ENCODE measurements at regions of chr2 and their contacts with region 1.

Region 1: GRCh38 chr2:144237830-144238627 is 281.9 kb downstream of the ZEB2 start:
- DNase-seq: no peak
- H3K4me3 Mint-ChIP-seq: no peak overlapping the region
- H3K27ac Mint-ChIP-seq: no peak overlapping the region
- H3K4me1 Mint-ChIP-seq: peaks cover 53% of the 10 kb centered on the region
- H3K27me3 Mint-ChIP-seq: no peaks in the 10 kb centered on the region

Region 2: GRCh38 chr2:143901185-143901842 is 336.7 kb before region 1 on chr2:
- CTCF ChIA-PET with region 1: no interaction called
- POLR2A ChIA-PET with region 1: no interaction called
- intact Hi-C with region 1: no loop called
- DNase-seq: no peak
- H3K4me3 Mint-ChIP-seq: no peak overlapping the region
- H3K27ac Mint-ChIP-seq: no peak overlapping the region
- H3K4me1 Mint-ChIP-seq: peaks cover 14% of the 10 kb centered on the region
- H3K27me3 Mint-ChIP-seq: peaks cover 3% of the 10 kb centered on the region

Region 3: GRCh38 chr2:144132357-144132756 is 105.7 kb before region 1 on chr2:
- CTCF ChIA-PET with region 1: no interaction called
- POLR2A ChIA-PET with region 1: no interaction called
- intact Hi-C with region 1: no loop called
- DNase-seq: no peak
- H3K4me3 Mint-ChIP-seq: no peak overlapping the region
- H3K27ac Mint-ChIP-seq: no peak overlapping the region
- H3K4me1 Mint-ChIP-seq: peaks cover 23% of the 10 kb centered on the region
- H3K27me3 Mint-ChIP-seq: no peaks in the 10 kb centered on the region

Region 4: DNA sequence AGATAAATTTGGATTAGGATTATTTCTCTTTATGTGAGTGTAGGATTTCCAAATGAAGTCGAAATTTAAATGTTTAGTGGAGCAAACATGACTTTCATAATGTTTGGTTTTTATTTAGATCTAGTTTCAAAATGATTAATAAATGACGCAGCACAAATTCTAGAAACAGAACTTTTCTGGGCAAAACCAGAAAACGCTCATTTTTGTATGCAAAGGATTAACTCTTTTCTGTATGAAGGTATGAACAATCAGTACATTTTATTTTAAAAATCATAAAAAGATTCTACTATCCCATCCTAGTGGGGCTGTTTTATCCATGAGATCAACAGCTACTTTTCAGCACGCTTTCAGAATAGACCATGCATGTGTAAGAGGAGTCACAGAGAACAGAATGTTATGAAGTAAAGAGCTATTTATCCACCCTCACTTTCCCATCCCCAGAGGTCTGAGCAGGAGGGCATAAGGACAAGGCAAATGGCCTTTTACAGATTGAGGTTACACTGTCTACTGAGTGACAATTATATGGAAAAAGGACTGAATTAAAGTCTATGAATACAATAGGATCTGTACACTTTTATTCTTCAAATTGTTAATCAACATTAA is 11.1 kb after region 1 on chr2:
- CTCF ChIA-PET with region 1: no interaction called
- POLR2A ChIA-PET with region 1: interaction called, 3 read pairs
- intact Hi-C with region 1: loop called (anchors 1 kb)
- DNase-seq: no peak
- H3K4me3 Mint-ChIP-seq: no peak overlapping the region
- H3K27ac Mint-ChIP-seq: peak overlapping the region; percentile 74
- H3K4me1 Mint-ChIP-seq: peaks cover 15% of the 10 kb centered on the region
- H3K27me3 Mint-ChIP-seq: no peaks in the 10 kb centered on the region

Region 5: DNA sequence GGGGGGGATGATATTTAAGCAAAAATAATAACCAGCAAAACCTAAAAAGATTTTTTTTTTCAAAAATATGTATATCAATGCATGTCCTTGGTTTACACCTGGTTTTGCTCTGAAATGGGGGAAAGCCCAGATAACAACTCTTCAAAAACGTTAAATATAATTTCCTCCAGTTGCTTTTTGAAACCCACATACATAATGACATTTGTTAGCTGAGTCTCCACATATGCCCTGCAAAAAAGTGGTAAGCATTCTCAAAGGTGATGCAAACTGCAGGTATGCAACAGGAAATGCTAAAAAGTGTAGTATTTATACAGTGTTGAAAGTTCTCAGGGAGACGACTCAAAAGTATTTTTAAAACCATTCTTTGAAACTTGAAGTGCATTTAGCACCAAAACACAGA is 23.3 kb after region 1 on chr2:
- CTCF ChIA-PET with region 1: no interaction called
- POLR2A ChIA-PET with region 1: no interaction called
- intact Hi-C with region 1: no loop called
- DNase-seq: no peak
- H3K4me3 Mint-ChIP-seq: no peak overlapping the region
- H3K27ac Mint-ChIP-seq: no peak overlapping the region
- H3K4me1 Mint-ChIP-seq: peaks cover 32% of the 10 kb centered on the region
- H3K27me3 Mint-ChIP-seq: no peaks in the 10 kb centered on the region

Measured in activated CD4-positive, alpha-beta memory T cell treated with anti-CD3 and anti-CD28 coated beads for 36 hours (primary cell).